Heart right ventricle (tissue), 16 donors: ENCODE measurements at regions of chr14 and their contacts with region 1.

Region 1: GRCh38 chr14:37985826-37986470 is 221.8 kb upstream of the SSTR1 start:
- DNase-seq: peak in 1 of 2 donors; percentile 27
- ATAC-seq: no peak
- H3K4me3 ChIP-seq: no peak overlapping the region
- H3K27ac ChIP-seq: no peak overlapping the region
- H3K4me1 ChIP-seq: no peaks in the 10 kb centered on the region
- H3K27me3 ChIP-seq: no peaks in the 10 kb centered on the region
- CTCF ChIP-seq: peak in 8 of 9 donors; percentile 50 to 76 (median 68)

Region 2: DNA sequence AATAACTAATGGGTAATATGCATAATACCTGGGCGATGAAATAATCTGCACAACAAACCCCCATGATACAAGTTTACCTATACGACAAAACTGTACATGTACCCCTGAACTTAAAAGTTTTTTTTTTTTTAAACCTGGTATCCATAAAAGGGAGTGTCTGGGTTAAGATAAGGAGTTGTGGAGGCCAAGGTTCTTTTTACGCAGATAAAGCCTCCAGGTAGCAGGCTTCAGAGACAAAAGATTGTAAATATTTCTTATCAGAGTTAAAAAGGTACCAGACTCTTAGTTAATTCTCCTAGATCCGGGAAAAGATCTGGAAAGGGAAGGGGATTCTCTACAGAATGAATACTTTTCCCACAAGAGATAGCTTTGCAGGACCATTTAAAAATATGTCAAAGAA is 37.7 kb before region 1 on chr14:
- intact Hi-C with region 1: no loop called
- DNase-seq: no peak
- ATAC-seq: no peak
- H3K4me3 ChIP-seq: no peak overlapping the region
- H3K27ac ChIP-seq: no peak overlapping the region
- H3K4me1 ChIP-seq: no peaks in the 10 kb centered on the region
- H3K27me3 ChIP-seq: no peaks in the 10 kb centered on the region
- CTCF ChIP-seq: no peak

Region 3: DNA sequence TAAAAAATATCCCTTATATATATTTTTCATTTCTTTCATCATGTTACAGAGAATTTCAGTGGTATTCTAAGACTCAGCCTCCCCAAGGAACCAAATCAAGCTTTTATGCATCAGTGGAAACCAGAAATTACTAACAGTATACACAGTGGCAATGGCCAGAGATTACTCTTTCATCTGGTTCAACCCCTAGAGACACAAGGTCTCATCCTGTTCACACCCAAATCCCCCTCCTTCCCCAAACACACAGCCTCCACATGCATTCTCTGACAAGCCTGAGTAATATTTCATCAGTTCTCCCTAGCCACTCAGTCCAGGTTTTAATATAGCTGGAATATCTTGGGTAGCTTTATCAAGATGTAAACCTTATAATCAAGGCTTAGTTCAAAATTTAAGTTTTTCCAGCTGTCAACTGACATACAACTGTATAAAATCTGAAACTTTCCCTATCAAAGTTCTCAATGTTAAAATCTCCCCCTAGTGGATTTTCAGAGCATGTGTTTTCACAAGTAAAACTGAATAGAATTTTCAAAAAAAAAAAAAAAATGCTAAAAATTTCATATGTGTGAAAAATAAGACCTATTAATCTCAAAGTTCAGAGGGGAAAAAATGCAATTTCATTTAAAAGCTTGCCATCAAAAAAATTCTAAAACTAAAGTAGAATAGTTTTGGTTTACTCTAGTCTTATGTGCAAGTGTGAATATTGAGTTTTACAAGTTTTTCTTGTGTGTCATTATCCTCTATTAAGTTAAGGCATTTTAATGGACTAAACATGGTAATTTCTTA is 211.2 kb after region 1 on chr14:
- intact Hi-C with region 1: loop called in 3 of 10 experiments (anchors 10 kb)
- DNase-seq: no peak
- ATAC-seq: no peak
- H3K4me3 ChIP-seq: no peak overlapping the region
- H3K27ac ChIP-seq: no peak overlapping the region
- H3K4me1 ChIP-seq: no peaks in the 10 kb centered on the region
- H3K27me3 ChIP-seq: no peaks in the 10 kb centered on the region
- CTCF ChIP-seq: peak; percentile 15 to 71 (median 57)

Region 4: DNA sequence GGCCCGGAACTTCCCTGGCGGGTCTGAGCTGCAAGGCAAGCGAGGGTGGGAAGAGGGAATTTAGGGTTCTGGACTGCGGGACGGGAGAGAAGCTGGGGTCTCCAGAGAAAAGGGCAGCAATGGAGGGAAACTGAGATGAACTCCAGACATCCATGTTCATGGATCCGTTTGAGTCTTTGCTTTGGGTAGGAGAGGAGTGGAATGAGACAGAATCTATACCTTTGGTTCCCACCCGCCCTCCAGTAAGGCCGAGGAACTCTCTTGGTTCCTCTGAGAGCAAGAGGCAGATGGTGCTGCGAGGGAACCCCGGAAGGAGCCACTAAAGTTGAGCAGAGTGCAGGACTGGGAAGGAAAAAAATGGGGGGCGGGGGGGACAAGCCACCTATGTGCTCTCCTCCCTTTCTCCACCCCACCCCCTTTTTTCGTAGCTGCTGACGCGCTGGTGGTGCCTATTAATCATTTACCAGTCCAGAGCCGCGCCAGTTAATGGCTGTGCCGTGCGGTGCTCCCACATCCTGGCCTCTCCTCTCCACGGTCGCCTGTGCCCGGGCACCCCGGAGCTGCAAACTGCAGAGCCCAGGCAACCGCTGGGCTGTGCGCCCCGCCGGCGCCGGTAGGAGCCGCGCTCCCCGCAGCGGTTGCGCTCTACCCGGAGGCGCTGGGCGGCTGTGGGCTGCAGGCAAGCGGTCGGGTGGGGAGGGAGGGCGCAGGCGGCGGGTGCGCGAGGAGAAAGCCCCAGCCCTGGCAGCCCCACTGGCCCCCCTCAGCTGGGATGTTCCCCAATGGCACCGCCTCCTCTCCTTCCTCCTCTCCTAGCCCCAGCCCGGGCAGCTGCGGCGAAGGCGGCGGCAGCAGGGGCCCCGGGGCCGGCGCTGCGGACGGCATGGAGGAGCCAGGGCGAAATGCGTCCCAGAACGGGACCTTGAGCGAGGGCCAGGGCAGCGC is 222.9 kb after region 1 on chr14:
- intact Hi-C with region 1: loop called in 2 of 10 experiments (anchors 10 kb)
- DNase-seq: peak; percentile 6 to 24
- ATAC-seq: peak; percentile 53 to 75 (median 64)
- H3K4me3 ChIP-seq: peak overlapping the region; percentile 28 to 64 (median 52)
- H3K27ac ChIP-seq: peak overlapping the region in 2 of 10 donors; percentile 13 to 54
- H3K4me1 ChIP-seq: peaks cover 0 to 41% (median 23%) of the 10 kb centered on the region in 9 donors
- H3K27me3 ChIP-seq: peaks cover 0 to 67% (median 50%) of the 10 kb centered on the region in 7 donors
- CTCF ChIP-seq: peak in 5 of 9 donors; percentile 8 to 34 (median 33)